ENCODE measurements at regions of chr15 and their contacts with region 1.

Region 1: GRCh38 chr15:40506964-40507571 is 36.3 kb downstream of the CHST14 start:
- DNase-seq: peak; percentile 74
- H3K4me3 Mint-ChIP-seq: no peak overlapping the region
- H3K27ac Mint-ChIP-seq: no peak overlapping the region
- H3K4me1 Mint-ChIP-seq: peaks cover 13% of the 10 kb centered on the region
- H3K27me3 Mint-ChIP-seq: peaks cover 45% of the 10 kb centered on the region

Region 2: GRCh38 chr15:40454904-40455391 is 52.1 kb before region 1 on chr15:
- CTCF ChIA-PET with region 1: interaction called, 11 read pairs
- POLR2A ChIA-PET with region 1: no interaction called
- intact Hi-C with region 1: no loop called
- DNase-seq: peak; percentile 31
- H3K4me3 Mint-ChIP-seq: no peak overlapping the region
- H3K27ac Mint-ChIP-seq: peak overlapping the region; percentile 69
- H3K4me1 Mint-ChIP-seq: peaks cover 68% of the 10 kb centered on the region
- H3K27me3 Mint-ChIP-seq: no peaks in the 10 kb centered on the region